Activated CD4-positive, alpha-beta T cell treated with anti-CD3 and anti-CD28 coated beads for 36 hours (primary cell): ENCODE measurements at regions of chr1 and their contacts with region 1.

Region 1: DNA sequence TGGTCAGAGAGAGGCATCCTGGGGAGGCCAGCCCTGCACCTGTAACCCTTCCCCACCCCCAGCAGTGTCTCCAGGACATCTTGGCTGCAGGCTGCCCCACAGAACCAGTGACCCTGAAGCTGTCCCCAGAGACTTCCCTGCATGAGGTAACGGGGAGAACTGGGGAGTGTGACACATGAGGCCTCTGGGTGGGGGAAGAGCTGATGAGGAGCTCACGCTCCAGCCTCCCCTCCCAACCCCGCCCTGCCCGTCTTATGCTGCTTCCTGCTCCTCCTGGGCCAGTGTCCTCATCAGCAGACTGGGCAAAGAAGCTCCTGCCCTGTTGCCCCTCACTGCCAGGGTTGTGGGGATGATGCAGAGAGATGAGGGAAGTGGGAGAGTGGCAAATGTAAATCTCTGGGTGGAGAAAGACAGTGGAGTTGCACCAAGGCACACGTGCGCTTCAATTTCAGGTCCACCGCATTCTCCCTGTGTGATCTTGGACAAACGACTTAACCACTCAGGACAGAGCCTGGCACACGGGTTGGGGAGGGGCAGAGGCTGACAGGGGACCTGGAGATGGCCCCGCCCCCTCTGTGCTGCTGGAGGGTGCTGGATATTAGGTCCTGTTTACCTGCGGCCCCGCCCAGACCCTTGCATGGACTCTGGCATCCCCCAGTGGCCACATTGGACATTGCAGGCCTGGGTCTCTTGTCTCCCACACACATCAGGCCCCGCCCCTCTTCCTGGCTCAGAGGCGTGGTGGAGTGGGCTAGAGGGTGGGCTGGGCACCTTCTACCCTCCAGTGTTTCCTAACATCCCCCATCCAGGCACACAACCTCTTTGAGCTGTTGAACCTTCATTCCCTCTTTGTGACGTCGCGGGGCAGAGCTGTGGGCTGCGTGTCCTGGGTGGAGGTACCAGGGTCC is 12.3 kb downstream of the CLCNKB start:
- DNase-seq: peak; percentile 94
- ATAC-seq: peak; percentile 99
- H3K4me3 Mint-ChIP-seq: no peak overlapping the region
- H3K27ac Mint-ChIP-seq: peak overlapping the region; percentile 42
- H3K4me1 Mint-ChIP-seq: peaks cover 6% of the 10 kb centered on the region
- H3K27me3 Mint-ChIP-seq: no peaks in the 10 kb centered on the region

Region 2: GRCh38 chr1:15788624-15789301 is 267.1 kb before region 1 on chr1:
- CTCF ChIA-PET with region 1: interaction called, 4 read pairs
- POLR2A ChIA-PET with region 1: no interaction called
- intact Hi-C with region 1: loop called (anchors 1 kb)
- DNase-seq: no peak
- ATAC-seq: no peak
- H3K4me3 Mint-ChIP-seq: no peak overlapping the region
- H3K27ac Mint-ChIP-seq: no peak overlapping the region
- H3K4me1 Mint-ChIP-seq: peaks cover 1% of the 10 kb centered on the region
- H3K27me3 Mint-ChIP-seq: peaks cover 6% of the 10 kb centered on the region

Region 3: DNA sequence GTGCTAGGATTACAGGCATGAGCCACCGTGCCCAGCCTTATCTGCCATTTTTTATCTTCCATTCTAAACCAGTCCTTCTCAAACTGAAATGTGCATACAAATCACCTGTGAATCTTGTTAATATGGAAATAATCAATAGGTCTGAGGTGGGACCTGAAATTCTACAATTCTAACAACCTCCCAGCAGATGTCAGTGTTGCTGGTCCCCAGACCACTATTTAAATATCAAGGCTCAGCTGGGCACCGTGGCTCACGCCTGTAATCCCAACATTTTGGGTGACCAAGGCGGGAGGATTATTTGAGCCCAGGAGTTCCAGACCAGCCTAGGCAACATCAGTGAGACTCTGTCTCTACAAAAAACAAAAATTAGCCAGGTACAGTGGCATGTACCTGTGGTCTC is 252.5 kb before region 1 on chr1:
- CTCF ChIA-PET with region 1: interaction called, 4 read pairs
- POLR2A ChIA-PET with region 1: no interaction called
- intact Hi-C with region 1: loop called in 1 of 2 experiments (anchors 1 kb)
- DNase-seq: peak; percentile 41
- ATAC-seq: peak; percentile 42
- H3K4me3 Mint-ChIP-seq: no peak overlapping the region
- H3K27ac Mint-ChIP-seq: no peak overlapping the region
- H3K4me1 Mint-ChIP-seq: no peaks in the 10 kb centered on the region
- H3K27me3 Mint-ChIP-seq: no peaks in the 10 kb centered on the region

Region 4: DNA sequence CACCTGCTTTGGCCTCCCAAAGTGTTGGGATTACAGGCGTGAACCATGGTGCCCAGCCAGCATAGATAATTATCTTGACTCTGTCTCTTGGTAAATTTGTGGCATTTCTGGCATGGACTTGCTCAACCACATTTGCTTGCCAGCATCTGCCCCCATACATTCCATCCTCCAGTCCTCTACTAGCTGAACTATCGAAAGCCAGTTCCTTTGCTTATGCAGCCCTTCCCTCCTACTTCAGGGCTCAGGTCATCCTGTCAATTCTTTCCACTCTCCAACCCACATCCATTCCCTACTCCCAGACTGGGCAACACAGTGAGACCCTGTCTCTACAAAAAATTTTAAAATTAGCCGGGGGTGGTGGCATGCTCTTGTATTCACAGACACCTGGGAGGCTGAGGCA is 235.4 kb before region 1 on chr1:
- CTCF ChIA-PET with region 1: no interaction called
- POLR2A ChIA-PET with region 1: no interaction called
- intact Hi-C with region 1: loop called (anchors 1 kb)
- DNase-seq: no peak
- ATAC-seq: no peak
- H3K4me3 Mint-ChIP-seq: no peak overlapping the region
- H3K27ac Mint-ChIP-seq: no peak overlapping the region
- H3K4me1 Mint-ChIP-seq: peaks cover 6% of the 10 kb centered on the region
- H3K27me3 Mint-ChIP-seq: no peaks in the 10 kb centered on the region

Region 5: DNA sequence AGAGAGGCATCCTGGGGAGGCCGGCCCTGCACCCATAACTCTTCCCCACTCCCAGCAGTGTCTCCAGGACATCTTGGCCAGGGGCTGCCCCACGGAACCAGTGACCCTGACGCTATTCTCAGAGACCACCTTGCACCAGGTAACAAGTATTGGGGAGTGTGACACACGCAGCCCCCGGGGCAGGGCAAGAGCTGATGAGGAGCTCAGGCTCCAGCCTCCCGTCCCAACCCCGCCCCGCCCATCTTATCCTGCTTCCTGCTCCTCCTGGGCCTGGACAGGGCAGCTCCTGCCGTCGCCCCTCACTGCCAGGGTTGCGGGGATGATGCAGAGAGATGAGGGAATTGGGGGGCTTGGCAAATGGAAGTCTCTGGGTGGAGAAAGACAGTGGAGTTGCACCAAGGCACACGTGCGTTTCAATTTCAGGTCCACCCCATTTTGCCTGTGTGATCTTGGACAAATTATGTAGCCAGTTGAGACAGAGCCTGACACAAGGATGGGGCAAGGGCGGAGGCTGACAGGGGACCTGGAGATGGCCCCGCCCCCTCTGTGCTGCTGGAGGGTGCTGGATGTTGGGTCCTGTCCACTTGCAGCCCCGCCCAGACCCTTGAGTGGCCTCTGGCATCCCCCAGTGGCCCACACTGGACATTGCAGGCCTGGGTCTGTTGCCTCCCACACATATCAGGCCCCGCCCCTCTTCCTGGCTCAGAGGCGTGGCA is 23.3 kb before region 1 on chr1:
- CTCF ChIA-PET with region 1: no interaction called
- POLR2A ChIA-PET with region 1: no interaction called
- intact Hi-C with region 1: loop called (anchors 1 kb)
- DNase-seq: peak; percentile 82
- ATAC-seq: peak; percentile 95
- H3K4me3 Mint-ChIP-seq: no peak overlapping the region
- H3K27ac Mint-ChIP-seq: no peak overlapping the region
- H3K4me1 Mint-ChIP-seq: peaks cover 2% of the 10 kb centered on the region
- H3K27me3 Mint-ChIP-seq: peaks cover 12% of the 10 kb centered on the region